ENCODE measurements at regions of chr10 and their contacts with region 1.

Region 1: GRCh38 chr10:34413214-34413613 is 401.9 kb downstream of the PARD3 start:
- DNase-seq: no peak
- H3K4me3 ChIP-seq: no peak overlapping the region
- H3K27ac ChIP-seq: no peak overlapping the region
- H3K27me3 ChIP-seq: no peaks in the 10 kb centered on the region
- CTCF ChIP-seq: no peak

Region 2: GRCh38 chr10:34467902-34468301 is 54.7 kb after region 1 on chr10:
- intact Hi-C with region 1: loop called in 1 of 2 experiments (anchors 2 kb)
- DNase-seq: no peak
- H3K4me3 ChIP-seq: no peak overlapping the region
- H3K27ac ChIP-seq: no peak overlapping the region
- H3K27me3 ChIP-seq: peaks cover 0 to 13% (median 0%) of the 10 kb centered on the region in 45 donors
- CTCF ChIP-seq: no peak